PC-3 (cell line): ENCODE measurements at regions of chr2 and their contacts with region 1.

Region 1: GRCh38 chr2:118882709-118883210 is 35.3 kb upstream of the EN1 start:
- DNase-seq: peak; percentile 82
- ATAC-seq: peak; percentile 75
- H3K4me3 ChIP-seq: peak overlapping the region; percentile 76
- H3K27ac ChIP-seq: no peak overlapping the region
- H3K4me1 ChIP-seq: peaks cover 16% of the 10 kb centered on the region
- H3K27me3 ChIP-seq: no peaks in the 10 kb centered on the region
- CTCF ChIP-seq: peak; percentile 95

Region 2: DNA sequence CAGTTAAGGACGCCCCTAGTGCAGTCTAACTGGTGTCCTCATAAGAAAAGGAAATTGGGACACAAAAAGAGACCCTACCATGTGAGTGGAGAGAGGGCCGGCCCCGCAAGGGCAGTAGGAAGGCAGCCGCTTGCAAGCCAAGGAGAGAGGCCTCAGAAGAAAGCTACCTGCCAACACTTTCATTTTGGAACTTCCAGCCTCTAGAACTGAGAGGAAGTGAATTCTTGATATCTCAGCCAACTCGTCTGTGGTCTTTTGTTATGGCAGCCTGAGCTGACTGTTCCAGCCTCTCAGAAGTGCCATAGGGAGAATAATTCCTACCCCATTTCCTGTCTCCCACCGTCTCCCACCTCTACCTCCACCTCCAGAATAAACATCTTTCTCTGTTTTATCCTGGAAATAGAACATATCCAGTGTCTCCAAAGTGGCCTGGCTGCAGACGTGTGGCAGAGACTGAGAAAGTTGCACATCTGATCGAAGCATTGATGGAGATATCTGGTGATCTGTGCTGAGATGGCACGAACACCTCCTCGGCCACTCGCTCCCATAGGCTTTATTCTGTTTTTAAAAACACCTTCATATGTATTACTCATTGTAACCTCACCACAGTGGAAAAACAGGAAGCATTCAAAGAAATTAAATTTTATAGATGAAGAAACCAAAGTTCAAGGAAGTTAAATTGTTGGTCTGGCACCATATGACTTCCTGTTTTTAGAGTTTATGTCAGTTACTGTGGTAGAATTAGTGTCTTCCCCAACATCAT is 19.7 kb after region 1 on chr2:
- CTCF ChIA-PET with region 1: no interaction called
- POLR2A ChIA-PET with region 1: no interaction called
- intact Hi-C with region 1: no loop called
- DNase-seq: peak; percentile 22
- ATAC-seq: no peak
- H3K4me3 ChIP-seq: no peak overlapping the region
- H3K27ac ChIP-seq: no peak overlapping the region
- H3K4me1 ChIP-seq: peaks cover 4% of the 10 kb centered on the region; the same call in 1 of the 2 replicates
- H3K27me3 ChIP-seq: no peaks in the 10 kb centered on the region
- CTCF ChIP-seq: no peak

Region 3: GRCh38 chr2:119011162-119011909 is 128.6 kb after region 1 on chr2:
- CTCF ChIA-PET with region 1: interaction called, 10 read pairs
- POLR2A ChIA-PET with region 1: no interaction called
- intact Hi-C with region 1: loop called (anchors 1 kb)
- DNase-seq: peak; percentile 70
- ATAC-seq: peak; percentile 94
- H3K4me3 ChIP-seq: peak overlapping the region; percentile 40
- H3K27ac ChIP-seq: no peak overlapping the region
- H3K4me1 ChIP-seq: no peaks in the 10 kb centered on the region
- H3K27me3 ChIP-seq: peaks cover 44% of the 10 kb centered on the region
- CTCF ChIP-seq: peak; percentile 74

Region 4: DNA sequence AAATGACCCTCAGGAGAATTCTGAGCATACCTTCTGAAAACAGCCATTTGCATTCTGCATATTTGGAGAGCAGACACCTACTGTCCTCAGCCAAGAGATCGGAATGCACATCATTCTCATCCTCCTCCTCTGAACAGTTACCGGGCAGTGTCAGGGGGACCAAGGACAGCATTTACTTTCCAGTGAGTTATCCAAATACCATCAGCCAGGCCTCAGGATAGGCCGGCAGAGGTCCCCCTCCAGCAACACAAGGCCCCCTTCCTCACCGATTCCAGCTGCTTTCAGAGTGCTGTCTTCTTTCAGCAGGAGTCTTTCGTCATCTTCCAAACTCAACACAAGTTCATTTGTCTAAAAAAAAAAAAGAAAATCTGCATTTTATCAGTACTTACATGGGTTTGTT is 428.6 kb after region 1 on chr2:
- CTCF ChIA-PET with region 1: no interaction called
- POLR2A ChIA-PET with region 1: no interaction called
- intact Hi-C with region 1: loop called (anchors 2 kb)
- DNase-seq: no peak
- ATAC-seq: no peak
- H3K4me3 ChIP-seq: no peak overlapping the region
- H3K27ac ChIP-seq: no peak overlapping the region
- H3K4me1 ChIP-seq: peaks cover 14% of the 10 kb centered on the region
- H3K27me3 ChIP-seq: no peaks in the 10 kb centered on the region
- CTCF ChIP-seq: no peak

Region 5: GRCh38 chr2:119476301-119477021 is 593.7 kb after region 1 on chr2:
- CTCF ChIA-PET with region 1: no interaction called
- POLR2A ChIA-PET with region 1: no interaction called
- intact Hi-C with region 1: loop called (anchors 2 kb)
- DNase-seq: peak; percentile 77
- ATAC-seq: peak; percentile 86
- H3K4me3 ChIP-seq: peak overlapping the region; percentile 22; the same call in 1 of the 2 replicates
- H3K27ac ChIP-seq: no peak overlapping the region
- H3K4me1 ChIP-seq: 0 out of 2 replicates have a peak, but pooled peaks cover 4% of the 10 kb centered on the region
- H3K27me3 ChIP-seq: no peaks in the 10 kb centered on the region
- CTCF ChIP-seq: peak; percentile 97